Panc1 (cell line): ENCODE measurements at regions of chr2 and their contacts with region 1.

Region 1: DNA sequence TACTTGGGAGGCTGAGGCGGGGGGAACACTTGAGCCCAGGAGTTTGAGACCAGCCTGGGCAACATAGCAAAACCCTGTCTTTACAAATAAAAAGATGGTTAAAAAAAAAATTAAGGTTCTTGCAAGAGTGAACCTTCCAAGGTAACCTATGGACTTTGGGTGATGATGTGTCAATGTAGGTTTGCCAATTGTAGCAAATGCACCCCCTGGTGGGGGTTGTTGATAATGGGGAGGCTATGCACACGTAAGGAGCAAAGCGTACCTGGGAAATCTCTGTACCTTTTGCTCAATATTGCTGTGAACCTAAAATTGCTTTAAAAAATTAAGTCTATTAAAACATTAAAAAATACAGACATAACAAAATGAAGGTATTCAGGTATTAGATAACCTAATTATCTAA is 70.4 kb downstream of the CWC22 start:
- DNase-seq: no peak
- ATAC-seq: no peak
- H3K4me3 ChIP-seq: no peak overlapping the region
- H3K27ac ChIP-seq: no peak overlapping the region
- H3K4me1 ChIP-seq: no peaks in the 10 kb centered on the region
- H3K27me3 ChIP-seq: no peaks in the 10 kb centered on the region
- CTCF ChIP-seq: peak; percentile 66

Region 2: DNA sequence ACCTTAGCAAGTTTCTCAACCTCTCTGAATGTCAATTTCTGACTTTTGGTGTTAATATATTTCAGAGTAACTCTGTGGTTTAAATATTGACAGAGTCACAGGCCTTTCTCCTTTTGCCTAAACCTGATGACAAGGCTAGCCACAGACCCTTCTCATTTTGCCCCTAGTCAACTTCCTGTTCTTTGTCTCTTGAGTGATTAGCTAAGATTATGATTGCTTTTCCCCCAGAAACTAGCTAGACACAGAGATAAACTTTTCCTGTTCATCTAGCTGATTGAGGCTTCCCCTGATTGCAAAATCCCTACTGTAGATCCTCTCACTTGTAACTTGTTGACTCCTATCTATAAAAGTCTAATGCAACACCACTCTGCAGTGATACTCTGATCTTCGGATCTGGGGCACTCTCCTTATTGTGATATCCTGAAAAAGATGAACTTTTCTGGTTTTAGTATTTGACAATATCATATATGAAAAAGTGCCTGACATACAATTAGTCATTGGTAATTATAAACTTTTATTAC is 316.6 kb before region 1 on chr2:
- CTCF ChIA-PET with region 1: no interaction called
- POLR2A ChIA-PET with region 1: no interaction called
- in situ Hi-C with region 1: no loop called
- intact Hi-C with region 1: loop called (anchors 5 kb)
- DNase-seq: no peak
- ATAC-seq: no peak
- H3K4me3 ChIP-seq: no peak overlapping the region
- H3K27ac ChIP-seq: no peak overlapping the region
- H3K4me1 ChIP-seq: no peaks in the 10 kb centered on the region
- H3K27me3 ChIP-seq: no peaks in the 10 kb centered on the region
- CTCF ChIP-seq: no peak

Region 3: GRCh38 chr2:180006781-180007579 is 70.3 kb after region 1 on chr2 and contains the start of gene CWC22:
- CTCF ChIA-PET with region 1: no interaction called
- POLR2A ChIA-PET with region 1: no interaction called
- in situ Hi-C with region 1: no loop called
- intact Hi-C with region 1: no loop called
- DNase-seq: peak; percentile 91
- ATAC-seq: peak; percentile 99
- H3K4me3 ChIP-seq: peak within 1 kb of the TSS; percentile 81 to 100
- H3K27ac ChIP-seq: peak within 1 kb of the TSS; percentile 97
- H3K4me1 ChIP-seq: peaks cover 6% of the 10 kb centered on the region; the same call in 1 of the 2 replicates
- H3K27me3 ChIP-seq: no peaks in the 10 kb centered on the region
- CTCF ChIP-seq: no peak
- total RNA-seq, gene CWC22: 17.2 TPM

Region 4: GRCh38 chr2:180017784-180018183 is 81.1 kb after region 1 on chr2:
- CTCF ChIA-PET with region 1: no interaction called
- POLR2A ChIA-PET with region 1: no interaction called
- in situ Hi-C with region 1: no loop called
- intact Hi-C with region 1: no loop called
- DNase-seq: no peak
- ATAC-seq: no peak
- H3K4me3 ChIP-seq: no peak overlapping the region
- H3K27ac ChIP-seq: no peak overlapping the region
- H3K4me1 ChIP-seq: no peaks in the 10 kb centered on the region
- H3K27me3 ChIP-seq: no peaks in the 10 kb centered on the region
- CTCF ChIP-seq: no peak

Region 5: GRCh38 chr2:180146541-180146940 is 209.9 kb after region 1 on chr2:
- CTCF ChIA-PET with region 1: no interaction called
- POLR2A ChIA-PET with region 1: no interaction called
- in situ Hi-C with region 1: no loop called
- intact Hi-C with region 1: no loop called
- DNase-seq: no peak
- ATAC-seq: no peak
- H3K4me3 ChIP-seq: no peak overlapping the region
- H3K27ac ChIP-seq: no peak overlapping the region
- H3K4me1 ChIP-seq: no peaks in the 10 kb centered on the region
- H3K27me3 ChIP-seq: no peaks in the 10 kb centered on the region
- CTCF ChIP-seq: no peak

Region 6: GRCh38 chr2:180443888-180444287 is 507.2 kb after region 1 on chr2:
- CTCF ChIA-PET with region 1: no interaction called
- POLR2A ChIA-PET with region 1: no interaction called
- in situ Hi-C with region 1: no loop called
- intact Hi-C with region 1: no loop called
- DNase-seq: no peak
- ATAC-seq: no peak
- H3K4me3 ChIP-seq: no peak overlapping the region
- H3K27ac ChIP-seq: no peak overlapping the region
- H3K4me1 ChIP-seq: no peaks in the 10 kb centered on the region
- H3K27me3 ChIP-seq: no peaks in the 10 kb centered on the region
- CTCF ChIP-seq: no peak